HepG2 (cell line): ENCODE measurements at regions of chr10 and their contacts with region 1.

Region 1: GRCh38 chr10:6014241-6014761 is 37.0 kb upstream of the IL15RA start:
- DNase-seq: peak; percentile 34
- ATAC-seq: peak; percentile 71
- H3K4me3 ChIP-seq: no peak overlapping the region
- H3K27ac ChIP-seq: no peak overlapping the region
- H3K4me1 ChIP-seq: no peaks in the 10 kb centered on the region
- H3K27me3 ChIP-seq: peaks cover 0 to 57% of the 10 kb centered on the region in 2 experiments; a peak in 4 of 5 replicates
- CTCF ChIP-seq: peak; percentile 68
- EP300 ChIP-seq: no peak
- POLR2A ChIP-seq: no peak
- RAD21 ChIP-seq: no peak

Region 2: DNA sequence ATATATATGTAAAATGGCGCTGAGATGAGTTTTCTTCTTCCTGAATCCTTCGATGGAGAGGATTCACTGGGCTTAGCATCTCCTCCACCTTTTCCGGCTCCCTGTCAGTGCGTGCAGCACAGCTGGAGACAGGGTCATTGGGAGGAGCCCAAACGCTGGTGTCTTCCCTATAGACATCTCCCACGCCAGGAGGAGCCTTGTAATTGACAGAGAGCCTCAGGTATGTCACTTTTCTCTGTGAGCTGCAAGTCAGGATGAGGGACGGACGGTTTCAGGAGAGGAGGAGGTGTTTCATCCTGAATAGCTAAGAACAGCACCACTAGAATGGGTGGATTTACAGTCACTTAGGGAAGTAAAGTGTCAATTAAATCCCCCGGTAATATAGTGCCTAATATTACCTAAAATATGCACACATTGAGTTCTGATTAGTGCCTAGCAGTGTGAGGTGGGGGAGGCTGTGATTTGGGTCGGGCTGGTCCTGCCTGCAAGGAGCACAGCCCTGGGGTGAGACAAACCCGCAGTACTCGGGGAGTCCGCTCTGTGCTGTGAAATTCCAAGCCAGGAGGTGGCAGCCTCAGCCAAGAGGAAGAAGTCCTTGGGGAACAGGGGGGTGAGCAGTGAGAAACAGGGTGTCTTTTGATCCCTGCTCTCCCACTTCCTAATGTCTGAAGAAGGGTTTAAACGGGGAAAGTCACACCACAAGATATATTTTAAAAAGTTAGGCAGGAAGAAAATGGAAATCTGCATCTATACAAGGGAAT is 65.1 kb before region 1 on chr10:
- CTCF ChIA-PET with region 1: interaction called, 3 read pairs
- POLR2A ChIA-PET with region 1: no interaction called
- in situ Hi-C with region 1: no loop called
- intact Hi-C with region 1: loop called (anchors 5 kb)
- DNase-seq: peak; percentile 46
- ATAC-seq: peak; percentile 90
- H3K4me3 ChIP-seq: no peak overlapping the region
- H3K27ac ChIP-seq: no peak overlapping the region
- H3K4me1 ChIP-seq: peaks cover 20% of the 10 kb centered on the region
- H3K27me3 ChIP-seq: peaks cover 2 to 45% of the 10 kb centered on the region in 2 experiments; a peak in 4 of 5 replicates
- CTCF ChIP-seq: peak; percentile 83
- EP300 ChIP-seq: no peak
- POLR2A ChIP-seq: no peak
- RAD21 ChIP-seq: peak; percentile 29; the same call in 1 of the 2 replicates

Region 3: DNA sequence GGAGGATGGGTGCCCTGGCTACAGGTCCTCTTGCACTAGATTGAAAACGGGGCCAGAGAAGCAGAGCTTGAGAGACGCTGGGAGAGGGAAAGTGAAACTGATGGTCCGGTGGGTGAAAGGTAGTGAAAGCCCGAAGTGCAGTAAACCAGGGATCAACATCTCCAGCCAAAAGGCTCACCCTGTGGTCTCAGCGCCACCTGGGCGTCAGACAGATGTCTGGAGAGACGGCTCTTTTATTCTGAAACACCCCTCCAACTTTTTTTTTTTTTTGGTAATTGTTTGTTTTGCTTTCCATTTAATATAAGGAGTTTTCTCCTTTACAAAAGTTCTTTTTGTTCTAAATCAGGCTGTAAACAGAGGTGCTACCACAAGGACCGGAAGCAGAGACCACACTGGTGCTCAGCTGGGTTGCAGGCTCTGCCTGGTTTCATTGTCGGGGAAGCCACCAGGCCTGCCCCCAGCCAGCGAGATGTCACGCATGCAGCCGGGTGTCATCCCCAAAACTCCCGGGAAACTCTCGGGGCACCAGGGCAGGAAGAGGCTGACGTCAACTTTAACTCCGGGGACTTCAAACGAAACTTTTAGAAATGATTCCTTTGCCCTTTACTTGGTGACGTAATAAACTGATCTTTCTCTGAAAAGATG is 36.6 kb after region 1 on chr10:
- CTCF ChIA-PET with region 1: interaction called, 3 read pairs
- POLR2A ChIA-PET with region 1: no interaction called
- in situ Hi-C with region 1: no loop called
- intact Hi-C with region 1: loop called (anchors 5 kb)
- DNase-seq: peak; percentile 41
- ATAC-seq: peak; percentile 79
- H3K4me3 ChIP-seq: peak overlapping the region; percentile 54 to 68 (median 67)
- H3K27ac ChIP-seq: no peak overlapping the region
- H3K4me1 ChIP-seq: peaks cover 30% of the 10 kb centered on the region
- H3K27me3 ChIP-seq: peaks cover 1 to 4% of the 10 kb centered on the region in 2 experiments; a peak in 2 of 5 replicates
- CTCF ChIP-seq: peak; percentile 62
- EP300 ChIP-seq: no peak
- POLR2A ChIP-seq: no peak
- RAD21 ChIP-seq: no peak

Region 4: GRCh38 chr10:6409971-6410651 is 395.8 kb after region 1 on chr10:
- CTCF ChIA-PET with region 1: no interaction called
- POLR2A ChIA-PET with region 1: no interaction called
- in situ Hi-C with region 1: no loop called
- intact Hi-C with region 1: no loop called
- DNase-seq: no peak
- ATAC-seq: no peak
- H3K4me3 ChIP-seq: no peak overlapping the region
- H3K27ac ChIP-seq: no peak overlapping the region
- H3K4me1 ChIP-seq: no peaks in the 10 kb centered on the region
- H3K27me3 ChIP-seq: peaks cover 0 to 13% of the 10 kb centered on the region in 2 experiments; a peak in 2 of 5 replicates
- CTCF ChIP-seq: no peak
- EP300 ChIP-seq: no peak
- POLR2A ChIP-seq: no peak
- RAD21 ChIP-seq: no peak